ENCODE measurements at regions of chr6 and their contacts with region 1.

Region 1: DNA sequence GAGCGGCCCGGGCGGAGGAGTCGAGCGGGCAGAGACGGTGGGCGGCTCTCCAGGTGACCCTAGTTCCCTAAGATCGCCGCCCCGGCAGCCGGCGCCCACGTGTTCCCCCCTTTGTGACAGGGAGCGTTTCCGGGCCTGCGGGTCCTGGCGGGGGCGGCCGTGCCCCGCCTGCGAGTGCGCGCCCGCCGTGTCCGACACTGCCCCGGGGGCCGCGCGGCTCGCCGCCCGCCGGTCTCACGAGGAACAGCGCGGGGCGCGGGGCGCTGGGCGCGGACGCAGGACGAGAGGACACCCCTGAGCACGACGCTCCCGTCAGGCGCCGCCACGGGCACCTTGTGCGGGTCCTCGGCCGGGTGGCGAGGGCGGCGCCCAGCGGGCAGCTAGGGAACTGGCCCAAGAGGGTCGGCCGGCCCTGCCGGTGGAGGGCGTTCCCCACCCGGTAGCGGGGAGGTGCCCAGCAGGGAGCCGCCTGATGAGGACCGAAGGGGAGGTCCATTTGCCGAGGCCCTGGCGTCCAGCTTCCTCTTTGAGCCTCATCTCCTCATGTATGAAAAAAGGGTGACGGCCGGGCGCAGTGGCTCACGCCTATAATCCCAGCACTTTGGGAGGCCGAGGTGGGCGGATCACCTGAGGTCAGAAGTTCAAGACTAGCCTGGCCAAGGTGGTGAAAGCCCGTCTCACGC is at the start of gene VARS1:
- DNase-seq: peak; percentile 90 to 92
- ATAC-seq: peak; percentile 94 to 98 (median 94)
- H3K4me3 ChIP-seq: peak within 1 kb of the TSS; percentile 67
- H3K4me3 Mint-ChIP-seq: peak within 1 kb of the TSS; percentile 91
- H3K27ac ChIP-seq: peak within 1 kb of the TSS; percentile 77
- H3K27ac Mint-ChIP-seq: peak within 1 kb of the TSS; percentile 96
- H3K4me1 ChIP-seq: peaks cover 34% of the 10 kb centered on the region
- H3K4me1 Mint-ChIP-seq: peaks cover 26 to 36% of the 10 kb centered on the region in 2 donors
- H3K27me3 ChIP-seq: no peaks in the 10 kb centered on the region
- H3K27me3 Mint-ChIP-seq: no peaks in the 10 kb centered on the region
- CTCF ChIP-seq: peak; percentile 74
- total RNA-seq, gene VARS1: 45.2 to 58.6 (median 49.2) TPM

Region 2: GRCh38 chr6:31806465-31807272 is 10.9 kb after region 1 on chr6 and contains the start of gene LSM2:
- intact Hi-C with region 1: loop called (anchors 1 kb)
- DNase-seq: peak; percentile 93 to 99
- ATAC-seq: peak; percentile 98 to 99 (median 98)
- H3K4me3 ChIP-seq: peak within 1 kb of the TSS; percentile 77
- H3K4me3 Mint-ChIP-seq: peak within 1 kb of the TSS; percentile 88
- H3K27ac ChIP-seq: peak within 1 kb of the TSS; percentile 80
- H3K27ac Mint-ChIP-seq: peak within 1 kb of the TSS; percentile 91 to 92
- H3K4me1 ChIP-seq: peaks cover 18% of the 10 kb centered on the region
- H3K4me1 Mint-ChIP-seq: peaks cover 15% of the 10 kb centered on the region in 2 donors
- H3K27me3 ChIP-seq: no peaks in the 10 kb centered on the region
- H3K27me3 Mint-ChIP-seq: no peaks in the 10 kb centered on the region
- CTCF ChIP-seq: no peak
- total RNA-seq, gene LSM2: 28.1 to 34.9 (median 29.2) TPM